Mammary epithelial cell (primary cell): ENCODE measurements at regions of chr3 and their contacts with region 1.

Region 1: GRCh38 chr3:152379415-152380042 is 110.8 kb downstream of the MBNL1 start:
- DNase-seq: no peak
- H3K4me3 ChIP-seq: no peak overlapping the region
- H3K27ac ChIP-seq: no peak overlapping the region
- H3K4me1 ChIP-seq: peaks cover 8% of the 10 kb centered on the region
- H3K27me3 ChIP-seq: no peaks in the 10 kb centered on the region
- CTCF ChIP-seq: no peak

Region 2: GRCh38 chr3:152405915-152406802 is 26.6 kb after region 1 on chr3:
- CTCF ChIA-PET with region 1: no interaction called
- dilution Hi-C with region 1: no loop called
- in situ Hi-C with region 1: no loop called
- intact Hi-C with region 1: loop called (anchors 1 kb)
- DNase-seq: peak; percentile 77
- H3K4me3 ChIP-seq: no peak overlapping the region
- H3K27ac ChIP-seq: no peak overlapping the region
- H3K4me1 ChIP-seq: no peaks in the 10 kb centered on the region
- H3K27me3 ChIP-seq: no peaks in the 10 kb centered on the region
- CTCF ChIP-seq: no peak

Region 3: DNA sequence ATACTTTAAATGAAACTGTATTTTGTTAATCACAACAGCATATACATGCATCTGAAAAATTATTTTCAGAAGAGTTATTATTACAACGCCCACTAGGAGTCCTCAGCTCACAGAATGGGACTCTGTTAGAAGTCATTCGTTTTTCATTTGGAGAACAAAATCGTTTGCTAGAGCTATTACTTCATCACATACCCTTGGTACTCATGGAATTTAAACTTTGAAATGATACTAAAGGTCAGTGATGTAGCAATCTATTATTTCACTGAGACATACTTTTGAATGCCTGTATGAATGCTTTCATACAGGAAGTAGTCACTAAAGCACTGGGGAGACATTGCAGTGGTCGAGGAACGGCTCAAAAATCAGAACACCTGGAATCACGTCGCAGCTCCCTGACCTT is 87.3 kb after region 1 on chr3:
- CTCF ChIA-PET with region 1: no interaction called
- dilution Hi-C with region 1: no loop called
- in situ Hi-C with region 1: no loop called
- intact Hi-C with region 1: no loop called
- DNase-seq: no peak
- H3K4me3 ChIP-seq: no peak overlapping the region
- H3K27ac ChIP-seq: no peak overlapping the region
- H3K4me1 ChIP-seq: no peaks in the 10 kb centered on the region
- H3K27me3 ChIP-seq: no peaks in the 10 kb centered on the region
- CTCF ChIP-seq: peak; percentile 51 to 52